ENCODE measurements at regions of chr15 and their contacts with region 1.

Region 1: DNA sequence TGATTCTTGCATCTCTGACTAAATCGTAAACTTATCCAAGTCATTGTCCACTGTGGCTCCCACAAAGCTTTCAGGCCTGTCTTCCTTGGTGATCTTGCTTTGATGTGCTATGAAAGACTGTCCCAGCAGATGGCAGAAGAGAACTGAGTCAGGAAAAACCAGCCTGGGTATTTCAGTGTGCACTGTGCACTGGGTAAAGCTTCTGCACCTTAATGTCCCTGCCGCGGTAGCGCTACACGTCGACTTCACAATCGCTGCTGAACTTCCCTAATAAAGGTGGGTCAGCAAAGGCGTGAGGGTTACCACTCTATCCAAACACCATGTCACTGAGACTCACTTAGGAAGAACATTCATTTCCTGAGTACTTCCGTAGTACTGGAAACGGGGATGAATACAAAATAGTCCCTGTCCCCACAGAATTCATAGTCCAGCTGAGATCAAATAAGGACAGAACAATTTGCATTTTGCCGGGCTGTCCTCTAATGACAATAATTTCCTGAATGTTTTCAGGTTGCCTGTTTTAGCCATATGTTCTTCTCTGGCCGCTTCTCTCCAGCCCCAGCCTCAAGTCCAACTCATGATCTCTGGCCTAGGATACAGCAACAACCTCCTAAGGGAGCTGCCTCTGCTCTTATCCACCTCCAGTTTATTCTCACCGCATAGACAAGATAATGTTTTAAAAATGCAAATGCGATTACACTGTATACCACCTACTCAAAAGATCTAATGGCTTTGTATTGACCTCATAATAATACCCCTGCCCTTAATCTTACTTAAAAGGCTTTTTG is 83.6 kb upstream of the AKAP13 start:
- DNase-seq: peak in 7 of 10 donors; percentile 22 to 84 (median 50)

Region 2: GRCh38 chr15:84979651-84980050 is 317.2 kb before region 1 on chr15:
- intact Hi-C with region 1: no loop called
- DNase-seq: peak in 2 of 10 donors; percentile 73 to 87

Region 3: GRCh38 chr15:85412956-85413854 is 116.4 kb after region 1 on chr15:
- intact Hi-C with region 1: loop called (anchors 5 kb)
- DNase-seq: peak in 5 of 10 donors; percentile 3 to 64 (median 31)

Region 4: DNA sequence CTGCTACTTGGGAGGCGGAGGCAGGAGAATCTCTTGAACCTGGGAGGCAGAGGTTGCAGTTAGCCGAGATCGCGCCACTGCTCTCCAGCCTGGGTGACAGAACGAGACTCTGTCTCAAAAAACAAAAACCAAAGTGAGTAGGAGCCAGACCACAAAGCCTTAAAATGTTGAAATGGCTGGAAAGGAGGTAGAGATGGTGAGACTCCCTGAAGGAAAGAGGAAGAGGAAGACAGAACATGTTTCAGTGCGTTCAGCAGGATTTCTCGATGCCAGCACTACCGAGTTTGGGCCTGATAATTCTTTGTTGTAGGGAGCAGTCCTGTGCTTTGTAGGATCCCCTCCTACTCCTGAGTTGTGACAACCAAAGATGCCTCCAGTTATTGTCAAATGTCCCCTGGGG is 273.5 kb after region 1 on chr15:
- intact Hi-C with region 1: no loop called
- DNase-seq: no peak